Naive thymus-derived CD8-positive, alpha-beta T cell (primary cell): ENCODE measurements at regions of chr14 and their contacts with region 1.

Region 1: GRCh38 chr14:91252871-91253794 is 8.6 kb upstream of the GPR68 start:
- DNase-seq: peak in 5 of 10 donors; percentile 31 to 44 (median 40)
- ATAC-seq: peak; percentile 29 to 48
- H3K4me3 Mint-ChIP-seq: peak overlapping the region; percentile 58 to 84 (median 76)
- H3K27ac Mint-ChIP-seq: peak overlapping the region in 6 of 10 donors; percentile 35 to 87 (median 58)
- H3K4me1 Mint-ChIP-seq: peaks cover 31 to 79% (median 74%) of the 10 kb centered on the region in 4 donors
- H3K27me3 Mint-ChIP-seq: no peaks in the 10 kb centered on the region

Region 2: DNA sequence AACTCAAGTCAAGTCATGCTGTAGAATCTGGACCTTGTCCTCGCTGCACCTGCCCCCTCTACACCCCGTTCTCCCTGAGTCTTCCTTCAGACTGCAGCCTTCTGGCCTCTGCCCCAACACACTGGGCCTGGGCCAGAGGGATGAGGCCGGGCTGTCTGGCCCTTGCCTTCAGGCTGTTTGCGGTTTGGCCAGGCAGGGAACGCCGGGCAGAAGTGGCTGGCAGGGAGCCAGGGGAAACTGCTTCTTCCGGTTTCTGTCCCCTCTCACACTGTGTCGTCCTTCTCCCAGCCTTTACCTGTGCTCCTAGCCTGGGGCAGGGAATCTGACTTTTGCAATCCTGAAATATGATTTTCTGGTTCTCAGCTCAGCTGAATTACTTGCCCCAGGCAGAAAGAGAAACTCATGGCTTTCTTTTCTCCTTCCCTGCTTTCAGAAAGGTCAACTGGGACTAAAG is 125.7 kb before region 1 on chr14:
- POLR2A ChIA-PET with region 1: no interaction called
- DNase-seq: no peak
- ATAC-seq: no peak
- H3K4me3 Mint-ChIP-seq: no peak overlapping the region
- H3K27ac Mint-ChIP-seq: peak overlapping the region in 2 of 10 donors; percentile 14 to 47
- H3K4me1 Mint-ChIP-seq: peaks cover 8 to 41% (median 26%) of the 10 kb centered on the region in 4 donors
- H3K27me3 Mint-ChIP-seq: no peaks in the 10 kb centered on the region

Region 3: GRCh38 chr14:91228112-91229004 is 24.8 kb before region 1 on chr14:
- POLR2A ChIA-PET with region 1: interaction called, 10 read pairs
- DNase-seq: peak; percentile 48 to 78 (median 64)
- ATAC-seq: peak; percentile 78 to 87
- H3K4me3 Mint-ChIP-seq: peak overlapping the region; percentile 26 to 84 (median 69)
- H3K27ac Mint-ChIP-seq: peak overlapping the region; percentile 4 to 95 (median 83)
- H3K4me1 Mint-ChIP-seq: peaks cover 38 to 92% (median 85%) of the 10 kb centered on the region in 4 donors
- H3K27me3 Mint-ChIP-seq: no peaks in the 10 kb centered on the region

Region 4: DNA sequence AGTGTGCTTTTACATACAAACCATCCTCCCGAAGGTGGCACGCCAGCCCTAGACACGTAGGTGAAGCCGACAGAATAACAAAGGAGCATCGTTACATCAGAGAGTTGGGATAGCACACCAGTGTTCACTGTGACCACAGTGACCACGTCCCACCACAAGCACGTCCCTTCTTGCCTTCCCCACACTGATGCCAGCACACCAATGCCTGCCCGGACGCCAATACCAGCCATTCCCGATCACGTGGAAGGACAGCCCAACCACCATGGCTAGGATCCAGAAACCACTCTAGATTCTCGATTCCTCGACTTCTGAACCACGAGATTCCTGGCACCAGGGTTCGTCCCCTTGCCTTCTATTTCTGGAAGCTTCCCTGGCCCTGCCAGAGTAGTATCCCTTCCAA is 39.4 kb after region 1 on chr14:
- POLR2A ChIA-PET with region 1: no interaction called
- DNase-seq: peak in 1 of 10 donors; percentile 20
- ATAC-seq: peak; percentile 31 to 57
- H3K4me3 Mint-ChIP-seq: peak overlapping the region in 1 of 10 donors; percentile 38
- H3K27ac Mint-ChIP-seq: peak overlapping the region; percentile 61 to 96 (median 87)
- H3K4me1 Mint-ChIP-seq: peaks cover 4 to 25% (median 12%) of the 10 kb centered on the region in 4 donors
- H3K27me3 Mint-ChIP-seq: no peaks in the 10 kb centered on the region